Panc1 (cell line): ENCODE measurements at regions of chr15 and their contacts with region 1.

Region 1: DNA sequence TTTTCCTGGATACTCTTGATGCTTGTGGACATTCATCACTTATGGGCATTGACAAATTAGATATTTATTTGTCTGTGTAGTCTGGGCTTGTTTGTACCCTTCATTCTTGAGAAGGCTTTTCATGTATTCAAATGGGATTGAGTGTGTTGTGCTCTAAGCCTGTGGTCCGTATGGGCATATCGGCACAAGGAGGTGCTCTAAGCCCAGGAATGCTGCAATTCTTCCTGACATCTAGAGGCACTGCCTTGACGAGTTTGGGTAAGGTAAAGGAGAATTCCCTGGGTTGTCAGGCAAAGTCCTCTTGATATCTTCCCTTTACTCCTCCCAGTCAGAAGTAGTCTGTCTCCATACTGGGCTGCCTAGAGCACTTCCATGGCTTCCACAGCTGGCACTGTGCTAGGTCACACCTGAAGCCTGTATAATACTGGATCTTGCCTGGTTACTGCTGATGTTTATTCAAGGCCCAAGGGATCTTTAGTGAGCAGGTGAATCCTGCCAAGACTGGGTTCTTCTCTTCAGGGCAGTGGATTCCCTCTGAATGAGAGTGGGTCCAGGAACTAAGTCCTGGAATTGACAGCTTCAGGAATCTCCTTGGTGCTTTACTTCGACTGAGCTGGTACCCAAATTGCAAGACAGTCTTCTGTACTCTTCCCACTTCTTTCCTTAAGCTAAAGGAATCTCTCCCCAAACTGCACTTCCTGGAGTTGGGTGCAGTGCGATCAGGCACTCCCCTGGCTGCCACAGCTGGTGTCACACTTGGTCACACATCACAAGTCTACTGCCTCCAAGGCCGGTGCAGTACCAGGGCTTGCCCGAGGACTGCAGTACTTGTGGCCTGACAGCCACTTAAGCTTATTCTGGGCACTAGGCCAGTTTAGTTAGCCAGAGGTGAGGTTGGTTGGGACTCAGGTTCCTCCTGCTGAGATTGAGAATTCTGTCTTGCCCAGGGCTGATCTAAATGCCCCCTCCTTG is 46.0 kb downstream of the GALK2 start:
- DNase-seq: no peak
- ATAC-seq: peak; percentile 88
- H3K4me3 ChIP-seq: no peak overlapping the region
- H3K27ac ChIP-seq: no peak overlapping the region
- H3K4me1 ChIP-seq: peaks cover 5% of the 10 kb centered on the region
- H3K27me3 ChIP-seq: no peaks in the 10 kb centered on the region
- CTCF ChIP-seq: 0 out of 2 replicates have a peak, but pooled peaks have one; percentile 18

Region 2: DNA sequence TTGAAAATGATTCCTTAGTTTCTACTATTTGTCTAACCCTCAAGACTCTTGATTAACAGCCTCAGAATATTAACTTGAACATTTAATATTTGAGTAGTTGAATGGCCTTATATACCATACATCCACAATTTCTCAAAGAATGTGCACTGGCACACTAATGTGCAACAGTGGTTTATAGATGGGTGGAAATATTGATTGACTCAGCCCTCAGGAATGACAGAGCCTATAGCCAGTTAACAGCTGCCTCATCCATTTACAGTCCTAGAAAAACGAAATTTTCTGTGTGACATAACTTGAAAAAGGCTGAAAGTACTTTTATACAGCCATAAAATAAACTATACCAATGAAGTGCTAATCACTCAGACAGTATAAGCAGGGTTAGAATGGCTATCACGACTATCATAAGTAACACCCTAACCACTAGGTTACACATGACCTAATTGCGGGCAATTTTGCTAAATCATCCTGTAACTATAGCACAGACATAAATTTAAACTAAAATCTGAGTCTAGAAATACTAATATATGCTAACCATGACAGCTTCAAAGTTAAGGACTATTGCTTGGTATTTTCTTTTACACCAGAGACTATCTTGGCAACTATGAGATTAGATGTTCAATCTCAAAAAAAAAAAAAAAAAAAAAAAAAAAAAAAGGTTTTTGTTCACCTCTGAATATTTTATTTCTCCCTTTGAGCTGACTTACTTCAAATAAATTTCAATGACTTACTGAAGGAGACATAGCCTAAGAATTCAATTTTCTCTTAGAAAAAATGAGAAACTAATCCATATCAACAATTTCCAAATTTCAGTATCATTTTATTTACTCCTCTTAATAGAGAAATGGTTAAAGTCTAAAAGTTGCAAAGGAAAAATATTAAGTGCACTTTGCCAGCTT is 179.2 kb before region 1 on chr15:
- CTCF ChIA-PET with region 1: interaction called, 14 read pairs
- POLR2A ChIA-PET with region 1: no interaction called
- in situ Hi-C with region 1: no loop called
- intact Hi-C with region 1: no loop called
- DNase-seq: no peak
- ATAC-seq: no peak
- H3K4me3 ChIP-seq: no peak overlapping the region
- H3K27ac ChIP-seq: no peak overlapping the region
- H3K4me1 ChIP-seq: peaks cover 7% of the 10 kb centered on the region; the same call in 1 of the 2 replicates
- H3K27me3 ChIP-seq: no peaks in the 10 kb centered on the region
- CTCF ChIP-seq: no peak